ENCODE measurements at regions of chrX and their contacts with region 1.

Region 1: GRCh38 chrX:134782796-134783195 is 124.5 kb upstream of the PLAC1 start:
- DNase-seq: peak; percentile 21
- H3K4me3 ChIP-seq: no peak overlapping the region
- H3K27ac ChIP-seq: no peak overlapping the region
- H3K4me1 ChIP-seq: peaks cover 7% of the 10 kb centered on the region
- H3K27me3 ChIP-seq: no peaks in the 10 kb centered on the region
- CTCF ChIP-seq: peak; percentile 48 to 59

Region 2: GRCh38 chrX:134423615-134424014 is 359.2 kb before region 1 on chrX:
- CTCF ChIA-PET with region 1: no interaction called
- dilution Hi-C with region 1: no loop called
- in situ Hi-C with region 1: no loop called
- intact Hi-C with region 1: loop called (anchors 10 kb)
- DNase-seq: peak; percentile 5
- H3K4me3 ChIP-seq: no peak overlapping the region
- H3K27ac ChIP-seq: no peak overlapping the region
- H3K4me1 ChIP-seq: no peaks in the 10 kb centered on the region
- H3K27me3 ChIP-seq: no peaks in the 10 kb centered on the region
- CTCF ChIP-seq: peak; percentile 40 to 55

Region 3: GRCh38 chrX:134484039-134484438 is 298.8 kb before region 1 on chrX:
- CTCF ChIA-PET with region 1: interaction called, 3 read pairs
- dilution Hi-C with region 1: no loop called
- in situ Hi-C with region 1: no loop called
- intact Hi-C with region 1: loop called (anchors 1 kb)
- DNase-seq: peak; percentile 39
- H3K4me3 ChIP-seq: no peak overlapping the region
- H3K27ac ChIP-seq: no peak overlapping the region
- H3K4me1 ChIP-seq: no peaks in the 10 kb centered on the region
- H3K27me3 ChIP-seq: no peaks in the 10 kb centered on the region
- CTCF ChIP-seq: peak; percentile 51 to 56

Region 4: DNA sequence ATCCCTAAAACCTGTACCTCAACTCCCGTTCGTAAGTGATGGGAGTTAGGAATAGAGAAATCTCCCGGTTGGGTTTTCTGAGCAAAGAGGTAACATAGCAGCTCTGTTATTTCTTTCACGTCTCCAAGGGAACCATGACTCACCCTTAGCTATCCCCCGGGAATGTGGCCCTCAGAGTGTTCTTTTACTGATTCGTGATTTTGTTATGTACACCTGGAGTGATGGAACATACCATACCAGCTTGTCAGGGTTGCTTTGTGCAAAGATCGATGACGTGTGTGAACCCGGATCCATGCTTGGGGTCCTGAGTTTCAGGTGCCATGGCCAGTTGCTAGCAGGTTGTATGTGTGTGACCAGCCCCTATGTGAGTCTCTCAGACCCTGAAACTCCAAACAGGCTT is 270.2 kb before region 1 on chrX:
- CTCF ChIA-PET with region 1: no interaction called
- dilution Hi-C with region 1: no loop called
- in situ Hi-C with region 1: loop called in 1 of 2 experiments (anchors 10 kb)
- intact Hi-C with region 1: no loop called
- DNase-seq: peak; percentile 88
- H3K4me3 ChIP-seq: no peak overlapping the region
- H3K27ac ChIP-seq: peak overlapping the region; percentile 93
- H3K4me1 ChIP-seq: peaks cover 18% of the 10 kb centered on the region
- H3K27me3 ChIP-seq: no peaks in the 10 kb centered on the region
- CTCF ChIP-seq: no peak

Region 5: DNA sequence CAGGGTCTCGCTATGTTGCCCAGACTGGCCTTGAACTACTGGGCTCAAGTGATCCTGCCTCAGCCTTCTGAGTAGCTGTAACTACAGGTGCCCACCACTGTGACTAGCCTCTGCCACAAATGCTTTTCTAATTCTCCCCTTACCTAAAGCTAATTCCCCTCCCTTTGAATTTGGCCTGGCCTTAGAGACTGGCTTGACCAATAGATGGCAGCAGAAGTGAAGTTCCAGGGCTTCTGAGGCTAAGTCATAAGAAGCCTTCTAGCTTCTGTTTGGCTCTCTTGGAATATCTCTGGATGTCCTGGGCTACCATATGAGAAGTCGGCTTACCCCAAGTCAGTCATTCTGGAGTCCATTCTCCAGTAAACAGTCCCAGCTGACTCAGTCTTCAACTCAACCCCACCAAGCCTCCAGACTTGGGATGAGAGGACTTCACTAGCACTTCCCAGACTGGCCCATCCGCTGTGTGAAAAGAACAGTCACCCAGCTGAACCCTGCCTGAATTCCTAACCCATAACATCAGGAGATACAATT is 261.9 kb before region 1 on chrX:
- CTCF ChIA-PET with region 1: interaction called, 6 read pairs
- dilution Hi-C with region 1: no loop called
- in situ Hi-C with region 1: loop called in 1 of 2 experiments (anchors 10 kb)
- intact Hi-C with region 1: loop called (anchors 1 kb)
- DNase-seq: peak; percentile 50
- H3K4me3 ChIP-seq: no peak overlapping the region
- H3K27ac ChIP-seq: no peak overlapping the region
- H3K4me1 ChIP-seq: no peaks in the 10 kb centered on the region
- H3K27me3 ChIP-seq: no peaks in the 10 kb centered on the region
- CTCF ChIP-seq: peak; percentile 66 to 77

Region 6: GRCh38 chrX:134806707-134807038 is 23.9 kb after region 1 on chrX:
- CTCF ChIA-PET with region 1: no interaction called
- dilution Hi-C with region 1: no loop called
- in situ Hi-C with region 1: no loop called
- intact Hi-C with region 1: loop called (anchors 1 kb)
- DNase-seq: no peak
- H3K4me3 ChIP-seq: peak overlapping the region in 2 of 3 experiments; percentile 55 to 64
- H3K27ac ChIP-seq: no peak overlapping the region
- H3K4me1 ChIP-seq: no peaks in the 10 kb centered on the region
- H3K27me3 ChIP-seq: no peaks in the 10 kb centered on the region
- CTCF ChIP-seq: no peak

Region 7: DNA sequence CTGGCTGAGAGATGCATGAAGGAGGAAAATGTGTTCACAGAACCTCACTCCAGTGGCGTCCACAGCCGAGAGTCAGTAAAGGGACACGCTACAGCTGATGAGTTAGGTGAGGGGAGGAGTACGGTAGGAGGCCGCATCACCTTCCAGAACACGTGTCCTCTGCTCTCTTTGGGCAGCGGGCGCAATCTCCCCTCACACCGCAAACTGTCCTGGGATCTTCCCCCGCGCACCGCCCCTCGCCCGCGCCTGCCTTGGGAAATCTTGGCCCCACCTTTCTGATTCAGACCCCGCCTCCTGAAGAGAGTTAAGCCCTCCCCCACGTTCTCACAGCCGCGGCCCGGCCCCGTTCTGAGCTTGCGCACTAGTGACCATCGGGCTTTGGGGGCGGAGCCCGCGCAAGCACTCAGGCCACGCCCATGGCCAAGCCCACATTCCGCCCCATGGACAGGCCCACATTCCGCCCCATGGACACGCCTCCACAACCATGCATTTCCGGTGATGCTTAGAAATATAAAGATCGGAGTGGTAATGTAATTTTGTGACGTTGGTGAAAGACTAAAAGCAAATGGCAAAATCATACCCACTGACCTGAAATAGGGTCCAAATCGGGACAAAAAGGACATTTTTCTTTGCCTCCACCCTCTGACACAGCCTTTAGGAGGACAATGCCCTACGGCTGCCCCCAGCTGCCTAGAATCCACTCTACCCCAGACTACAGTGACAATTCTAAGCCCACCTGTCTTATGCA is 221.3 kb after region 1 on chrX:
- CTCF ChIA-PET with region 1: no interaction called
- dilution Hi-C with region 1: no loop called
- in situ Hi-C with region 1: no loop called
- intact Hi-C with region 1: loop called (anchors 5 kb)
- DNase-seq: peak; percentile 81
- H3K4me3 ChIP-seq: peak overlapping the region; percentile 38 to 56 (median 47)
- H3K27ac ChIP-seq: peak overlapping the region; percentile 52
- H3K4me1 ChIP-seq: no peaks in the 10 kb centered on the region
- H3K27me3 ChIP-seq: no peaks in the 10 kb centered on the region
- CTCF ChIP-seq: no peak